ENCODE measurements at regions of chr6 and their contacts with region 1.

Region 1: DNA sequence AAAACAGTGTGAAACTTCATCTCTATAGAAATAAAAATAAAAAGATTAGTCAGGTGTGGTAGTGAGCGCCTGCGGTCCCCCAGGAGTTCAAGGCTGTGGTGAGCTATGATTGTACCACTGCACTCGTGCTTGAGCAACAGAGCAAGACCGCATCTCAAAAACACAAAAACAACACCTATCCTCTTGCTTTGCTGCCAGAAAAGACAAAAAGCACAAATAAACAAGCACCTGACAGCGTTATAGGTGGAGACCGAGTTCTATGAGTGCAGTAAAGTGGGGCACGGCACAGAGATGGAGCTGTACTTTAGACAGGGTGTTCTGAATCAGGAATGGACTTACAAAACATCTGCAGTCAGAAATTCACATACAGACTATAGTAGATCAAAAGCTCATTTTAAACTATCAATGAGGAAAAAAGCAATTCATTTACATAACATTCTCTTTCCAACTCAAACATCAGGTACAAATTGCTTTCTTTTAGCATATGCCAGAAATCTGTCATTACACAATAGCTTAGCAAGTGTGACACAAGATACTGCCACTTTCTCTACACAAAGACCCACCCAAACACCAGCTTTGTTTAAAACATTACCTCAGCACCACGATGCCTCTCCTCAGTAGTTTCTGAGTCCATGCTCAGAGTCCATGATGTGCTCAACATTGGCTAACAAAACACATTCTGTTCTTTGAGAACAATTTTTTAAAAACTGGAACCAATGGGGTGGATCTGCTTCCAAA is 10.1 kb downstream of the EZR start:
- DNase-seq: no peak
- ATAC-seq: no peak
- H3K4me3 Mint-ChIP-seq: 0 out of 2 replicates have a peak overlapping the region, but pooled peaks have one; percentile 0
- H3K27ac Mint-ChIP-seq: peak overlapping the region; percentile 71
- H3K4me1 Mint-ChIP-seq: peaks cover 97% of the 10 kb centered on the region
- H3K27me3 Mint-ChIP-seq: no peaks in the 10 kb centered on the region
- CTCF ChIP-seq: no peak

Region 2: GRCh38 chr6:158793432-158793831 is 15.7 kb before region 1 on chr6:
- CTCF ChIA-PET with region 1: interaction called, 12 read pairs
- POLR2A ChIA-PET with region 1: no interaction called
- DNase-seq: no peak
- ATAC-seq: peak; percentile 83
- H3K4me3 Mint-ChIP-seq: no peak overlapping the region
- H3K27ac Mint-ChIP-seq: peak overlapping the region; percentile 85
- H3K4me1 Mint-ChIP-seq: peaks cover 73% of the 10 kb centered on the region
- H3K27me3 Mint-ChIP-seq: no peaks in the 10 kb centered on the region
- CTCF ChIP-seq: no peak

Region 3: DNA sequence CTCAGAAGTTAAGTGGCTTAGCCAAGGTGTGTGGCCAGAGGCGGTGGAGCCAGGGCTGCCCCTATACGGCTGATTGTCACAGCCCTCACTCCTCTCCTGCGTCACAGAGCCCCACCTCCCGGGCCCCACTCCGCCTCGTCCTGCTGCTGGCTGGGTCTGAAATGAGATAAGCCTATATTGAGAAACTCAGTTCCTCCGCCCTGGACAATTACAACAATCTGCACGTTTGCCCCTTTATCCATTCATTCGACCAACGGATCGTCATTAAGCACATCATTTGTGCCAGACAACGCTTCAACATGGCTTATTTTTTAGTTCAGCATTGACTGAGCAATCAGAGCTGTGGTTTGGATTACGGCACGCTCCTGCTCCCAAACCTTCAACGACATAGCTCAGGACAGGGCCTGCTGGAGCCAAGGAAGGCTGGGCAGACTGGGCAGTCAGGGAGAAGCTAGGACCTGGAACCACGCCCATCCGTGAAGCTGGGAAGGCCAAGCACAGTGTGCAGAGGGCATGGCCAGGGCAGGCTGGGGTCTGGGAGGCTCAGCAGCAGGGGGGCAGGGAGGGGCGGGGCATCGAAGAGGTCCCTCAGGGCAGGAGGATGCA is 26.6 kb after region 1 on chr6:
- CTCF ChIA-PET with region 1: no interaction called
- POLR2A ChIA-PET with region 1: no interaction called
- DNase-seq: peak; percentile 37
- ATAC-seq: peak; percentile 86
- H3K4me3 Mint-ChIP-seq: no peak overlapping the region
- H3K27ac Mint-ChIP-seq: no peak overlapping the region
- H3K4me1 Mint-ChIP-seq: peaks cover 20% of the 10 kb centered on the region
- H3K27me3 Mint-ChIP-seq: no peaks in the 10 kb centered on the region; the same call in 1 of the 2 replicates
- CTCF ChIP-seq: no peak